ENCODE measurements at regions of chr18 and their contacts with region 1.

Region 1: GRCh38 chr18:43195421-43195820 is 79.9 kb upstream of the RIT2 start:
- DNase-seq: no peak
- H3K4me3 ChIP-seq: no peak overlapping the region
- H3K27ac ChIP-seq: no peak overlapping the region
- H3K4me1 ChIP-seq: no peaks in the 10 kb centered on the region
- H3K27me3 ChIP-seq: no peaks in the 10 kb centered on the region
- CTCF ChIP-seq: no peak
- EP300 ChIP-seq: no peak
- POLR2A ChIP-seq: no peak

Region 2: DNA sequence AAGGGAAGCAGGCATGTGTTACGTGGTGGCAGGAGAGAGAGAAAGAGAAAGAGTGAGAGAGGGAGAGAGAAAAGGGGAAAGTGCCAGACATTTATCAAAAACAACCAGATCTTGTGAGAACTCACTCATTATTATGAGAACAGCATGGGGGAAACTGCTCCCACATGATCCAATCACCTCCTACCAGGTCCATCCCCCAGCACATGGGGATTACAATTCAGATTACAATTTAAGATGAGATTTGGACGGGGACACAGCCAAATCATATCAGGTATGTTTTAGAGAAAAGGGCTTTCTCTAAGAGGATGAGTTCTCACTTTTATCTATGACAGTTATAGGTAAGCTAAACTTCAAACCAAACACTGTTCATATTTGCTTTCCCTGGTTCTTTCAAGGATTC is 1837.7 kb before region 1 on chr18:
- intact Hi-C with region 1: loop called in 1 of 4 experiments (anchors 5 kb)
- DNase-seq: no peak
- H3K4me3 ChIP-seq: no peak overlapping the region
- H3K27ac ChIP-seq: no peak overlapping the region
- H3K4me1 ChIP-seq: no peaks in the 10 kb centered on the region
- H3K27me3 ChIP-seq: no peaks in the 10 kb centered on the region
- CTCF ChIP-seq: no peak
- EP300 ChIP-seq: no peak
- POLR2A ChIP-seq: no peak

Region 3: GRCh38 chr18:43248610-43249249 is 53.3 kb after region 1 on chr18:
- intact Hi-C with region 1: no loop called
- DNase-seq: no peak
- H3K4me3 ChIP-seq: no peak overlapping the region
- H3K27ac ChIP-seq: no peak overlapping the region
- H3K4me1 ChIP-seq: no peaks in the 10 kb centered on the region
- H3K27me3 ChIP-seq: no peaks in the 10 kb centered on the region
- CTCF ChIP-seq: no peak
- EP300 ChIP-seq: no peak
- POLR2A ChIP-seq: no peak